ENCODE measurements at regions of chr17 and their contacts with region 1.

Region 1: DNA sequence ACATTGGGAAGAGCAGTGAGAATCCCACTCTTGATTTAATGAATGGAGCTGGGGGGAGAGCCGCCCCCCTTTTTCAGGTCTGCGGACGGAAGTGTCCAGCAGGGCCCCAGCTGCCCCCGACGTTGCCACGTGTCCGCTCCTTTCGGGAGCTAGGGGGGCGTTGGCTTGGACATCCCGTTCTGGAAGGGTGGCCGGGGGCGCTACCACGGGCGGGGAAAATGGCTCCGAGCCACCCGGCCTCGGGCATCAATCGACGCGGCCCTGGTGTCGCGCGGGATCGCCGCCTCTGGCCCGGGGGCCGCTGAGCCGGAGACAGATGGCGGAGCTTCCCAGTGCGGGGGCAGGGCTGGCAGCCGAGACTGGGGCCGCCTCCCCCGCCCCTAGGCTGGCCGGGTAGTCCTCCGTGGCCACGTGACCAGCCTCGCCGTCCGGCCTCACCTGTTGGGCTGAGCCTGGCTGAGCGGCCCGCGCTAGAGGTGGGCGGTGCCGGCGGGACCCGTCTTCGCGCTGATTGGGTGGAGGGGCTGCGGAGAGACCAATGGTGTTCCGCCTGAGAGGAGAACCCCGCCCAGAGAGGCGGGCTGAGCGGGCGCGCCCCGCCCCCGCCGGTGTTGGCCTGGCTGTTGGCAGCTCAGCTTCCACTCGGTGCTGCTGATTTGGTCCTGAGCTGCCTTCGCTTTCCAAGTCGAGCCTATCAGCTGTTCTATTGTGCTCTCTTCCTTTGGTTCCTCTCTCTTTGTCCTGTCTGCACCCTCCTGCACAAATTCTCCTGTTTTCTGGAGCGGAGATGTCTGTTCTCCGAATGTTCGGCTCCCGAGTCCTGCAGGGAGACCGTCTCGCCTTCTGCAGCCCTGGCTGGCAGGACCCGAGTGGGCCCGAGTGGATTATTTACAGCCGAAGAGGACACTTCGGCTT is 8.3 kb downstream of the HS3ST3B1 start:
- DNase-seq: peak; percentile 94
- ATAC-seq: peak; percentile 97
- H3K4me3 ChIP-seq: peak overlapping the region; percentile 57 to 92 (median 71)
- H3K27ac ChIP-seq: peak overlapping the region; percentile 93
- H3K4me1 ChIP-seq: peaks cover 47% of the 10 kb centered on the region
- H3K27me3 ChIP-seq: no peaks in the 10 kb centered on the region
- CTCF ChIP-seq: no peak; the same call in 1 of the 2 replicates
- EP300 ChIP-seq: peak in 1 of 2 experiments; percentile 30; a peak in 1 of 4 replicates
- POLR2A ChIP-seq: peak; percentile 64 to 71
- RAD21 ChIP-seq: no peak; the same call in 1 of the 2 replicates

Region 2: DNA sequence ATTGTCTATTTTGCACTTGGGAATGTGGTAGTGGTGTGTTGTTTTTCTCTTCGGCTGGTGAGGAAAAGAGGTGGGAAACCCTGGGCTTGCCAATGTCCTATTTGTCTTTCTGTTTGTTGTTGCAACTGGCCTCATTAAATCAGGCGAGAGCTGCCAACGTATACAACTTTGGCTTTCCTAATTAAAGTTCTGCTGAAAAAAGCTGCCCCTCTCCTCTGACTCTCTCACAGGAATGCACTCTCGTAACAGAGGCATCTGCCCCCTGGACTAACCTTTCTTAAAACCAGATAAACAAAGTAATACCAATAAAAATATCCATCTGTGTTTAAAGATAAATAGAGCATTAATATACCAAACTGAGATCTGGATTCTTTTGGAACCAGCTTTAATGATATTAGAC is 80.3 kb before region 1 on chr17:
- CTCF ChIA-PET with region 1: no interaction called
- POLR2A ChIA-PET with region 1: no interaction called
- in situ Hi-C with region 1: no loop called
- intact Hi-C with region 1: no loop called
- DNase-seq: no peak
- ATAC-seq: no peak
- H3K4me3 ChIP-seq: no peak overlapping the region
- H3K27ac ChIP-seq: no peak overlapping the region
- H3K4me1 ChIP-seq: no peaks in the 10 kb centered on the region
- H3K27me3 ChIP-seq: no peaks in the 10 kb centered on the region
- CTCF ChIP-seq: no peak
- EP300 ChIP-seq: no peak
- POLR2A ChIP-seq: no peak
- RAD21 ChIP-seq: no peak

Region 3: DNA sequence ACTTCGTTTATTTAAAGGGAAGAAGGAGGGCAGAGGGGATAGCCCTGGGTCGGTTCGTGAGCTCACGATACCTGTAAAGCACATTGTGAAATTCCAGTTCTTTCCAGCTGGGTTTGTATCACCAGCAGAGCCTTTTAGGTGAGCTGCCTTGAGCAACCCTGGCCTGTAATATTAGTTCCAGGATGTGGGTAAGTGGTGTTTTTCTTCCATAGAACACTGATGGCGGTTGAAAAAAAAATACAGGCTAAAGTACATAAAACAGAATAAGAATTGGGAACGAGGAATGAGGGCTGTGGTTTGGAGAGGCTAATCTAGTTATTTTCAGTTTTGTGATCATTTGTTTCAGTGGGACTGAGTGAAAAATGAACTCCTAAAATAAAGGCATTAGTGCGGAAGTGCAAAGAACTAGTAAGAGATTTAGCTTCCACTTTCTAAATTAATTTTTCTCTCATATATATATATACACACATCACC is 12.3 kb after region 1 on chr17:
- CTCF ChIA-PET with region 1: no interaction called
- POLR2A ChIA-PET with region 1: interaction called, 11 read pairs
- in situ Hi-C with region 1: no loop called
- intact Hi-C with region 1: no loop called
- DNase-seq: peak; percentile 34
- ATAC-seq: peak; percentile 46
- H3K4me3 ChIP-seq: peak overlapping the region in 1 of 3 experiments; percentile 17; a peak in 1 of 6 replicates
- H3K27ac ChIP-seq: peak overlapping the region; percentile 50
- H3K4me1 ChIP-seq: peaks cover 100% of the 10 kb centered on the region
- H3K27me3 ChIP-seq: no peaks in the 10 kb centered on the region
- CTCF ChIP-seq: no peak
- EP300 ChIP-seq: peak in 1 of 2 experiments; percentile 20; a peak in 1 of 4 replicates
- POLR2A ChIP-seq: no peak
- RAD21 ChIP-seq: no peak

Measured in HepG2 (cell line).